Activated CD8-positive, alpha-beta T cell treated with anti-CD3 and anti-CD28 coated beads for 36 hours (primary cell): ENCODE measurements at regions of chr3 and their contacts with region 1.

Region 1: DNA sequence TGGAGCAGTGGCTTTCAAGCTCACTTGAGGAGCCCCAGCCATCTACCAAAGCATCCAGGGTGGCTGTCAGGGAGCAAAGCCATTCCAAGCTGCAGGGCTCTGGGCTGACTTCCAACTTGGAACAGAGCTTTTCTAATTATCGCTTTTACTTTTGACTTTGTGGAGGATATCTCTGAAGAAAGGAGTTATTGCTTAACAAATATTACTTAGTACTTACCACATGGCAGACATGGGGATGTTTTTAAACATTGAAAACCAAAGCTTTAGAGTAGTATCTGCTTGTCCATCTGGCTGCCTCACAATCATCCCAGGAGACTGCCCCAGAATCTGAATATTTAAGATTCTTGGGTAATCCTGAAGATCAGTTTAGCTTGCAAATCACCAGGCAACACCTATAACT is 8.9 kb downstream of the TAGLN3 start:
- DNase-seq: no peak
- ATAC-seq: no peak
- H3K4me3 Mint-ChIP-seq: no peak overlapping the region
- H3K27ac Mint-ChIP-seq: no peak overlapping the region
- H3K4me1 Mint-ChIP-seq: peaks cover 30% of the 10 kb centered on the region
- H3K27me3 Mint-ChIP-seq: no peaks in the 10 kb centered on the region
- CTCF ChIP-seq: no peak

Region 2: DNA sequence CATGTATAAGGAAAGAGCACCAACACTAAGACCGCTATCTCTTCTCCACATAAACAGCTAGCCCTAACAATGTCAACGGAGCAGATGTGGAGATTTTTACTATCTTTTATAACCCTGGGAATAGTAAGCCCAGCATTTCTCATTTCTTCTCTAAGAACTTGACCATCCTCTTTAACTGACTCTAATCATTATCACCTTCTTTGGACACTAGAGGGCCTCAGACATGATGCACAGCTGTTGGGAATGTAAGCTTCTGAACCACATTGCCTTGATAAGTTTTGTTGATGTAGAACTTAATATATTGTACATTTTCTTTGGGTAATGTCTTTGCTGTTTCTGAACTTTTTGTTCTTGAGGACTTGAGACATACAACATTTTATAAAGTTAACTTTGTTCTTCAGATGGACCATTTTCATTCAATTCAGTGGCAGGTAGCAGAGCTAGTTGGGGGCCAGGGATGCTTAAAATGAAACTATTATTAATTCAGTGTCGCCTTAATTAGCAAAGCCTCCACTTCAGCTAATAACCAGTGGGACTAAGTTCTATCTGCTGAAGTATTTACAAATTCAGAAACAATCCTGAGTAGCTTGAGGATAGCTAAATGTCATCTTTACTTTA is 18.5 kb before region 1 on chr3:
- CTCF ChIA-PET with region 1: interaction called, 477 read pairs
- POLR2A ChIA-PET with region 1: interaction called, 11 read pairs
- intact Hi-C with region 1: no loop called
- DNase-seq: no peak
- ATAC-seq: peak; percentile 68
- H3K4me3 Mint-ChIP-seq: no peak overlapping the region
- H3K27ac Mint-ChIP-seq: peak overlapping the region; percentile 28
- H3K4me1 Mint-ChIP-seq: peaks cover 34% of the 10 kb centered on the region
- H3K27me3 Mint-ChIP-seq: no peaks in the 10 kb centered on the region
- CTCF ChIP-seq: peak; percentile 71

Region 3: DNA sequence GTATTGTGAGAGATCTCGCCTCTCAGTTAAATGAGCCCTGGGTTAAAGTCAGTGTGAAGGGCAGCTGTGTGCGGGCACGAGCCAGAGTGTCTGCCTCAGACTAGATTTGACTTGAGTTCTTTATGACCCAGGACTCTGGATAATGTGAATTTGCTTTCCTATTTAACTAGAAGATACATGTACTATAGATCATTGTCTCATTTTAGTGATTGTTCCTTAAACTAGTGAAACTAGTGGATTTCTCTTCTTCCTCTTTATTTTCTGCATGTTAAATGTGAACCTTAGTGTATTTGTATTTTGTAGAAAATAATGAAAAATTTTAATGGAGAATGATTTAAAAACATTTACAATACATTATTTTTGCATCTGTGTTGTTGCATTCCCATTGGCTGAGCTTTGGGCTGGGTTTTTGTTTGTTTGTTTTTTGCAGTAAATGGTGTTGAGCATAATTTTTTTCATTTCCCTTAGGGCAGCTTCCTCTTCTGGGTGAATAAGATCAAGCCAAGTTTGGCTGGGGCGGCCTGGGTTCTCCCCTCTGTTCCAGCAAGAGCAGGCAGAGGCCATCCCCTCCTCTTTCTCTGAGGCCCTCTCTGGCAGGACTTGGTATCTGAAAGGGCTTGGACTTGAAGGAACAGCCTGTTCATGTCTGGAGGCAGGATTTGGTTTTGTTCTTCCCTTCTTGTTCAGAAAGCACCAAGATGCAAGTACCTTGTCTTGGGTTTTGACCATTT is 110.4 kb after region 1 on chr3:
- CTCF ChIA-PET with region 1: no interaction called
- POLR2A ChIA-PET with region 1: no interaction called
- intact Hi-C with region 1: no loop called
- DNase-seq: no peak
- ATAC-seq: no peak
- H3K4me3 Mint-ChIP-seq: no peak overlapping the region
- H3K27ac Mint-ChIP-seq: no peak overlapping the region
- H3K4me1 Mint-ChIP-seq: peaks cover 40% of the 10 kb centered on the region
- H3K27me3 Mint-ChIP-seq: no peaks in the 10 kb centered on the region
- CTCF ChIP-seq: no peak